ENCODE measurements at regions of chr6 and their contacts with region 1.

Region 1: GRCh38 chr6:104957301-104958177 is 632 bp downstream of the LIN28B start:
- DNase-seq: peak; percentile 19 to 52
- ATAC-seq: peak; percentile 55 to 77
- H3K4me3 ChIP-seq: peak overlapping the region; percentile 79
- H3K27ac ChIP-seq: peak overlapping the region; percentile 91 to 96
- H3K4me1 ChIP-seq: peaks cover 18% of the 10 kb centered on the region
- CTCF ChIP-seq: no peak
- EP300 ChIP-seq: no peak
- POLR2A ChIP-seq: no peak; the same call in 1 of the 2 replicates
- RAD21 ChIP-seq: no peak

Region 2: DNA sequence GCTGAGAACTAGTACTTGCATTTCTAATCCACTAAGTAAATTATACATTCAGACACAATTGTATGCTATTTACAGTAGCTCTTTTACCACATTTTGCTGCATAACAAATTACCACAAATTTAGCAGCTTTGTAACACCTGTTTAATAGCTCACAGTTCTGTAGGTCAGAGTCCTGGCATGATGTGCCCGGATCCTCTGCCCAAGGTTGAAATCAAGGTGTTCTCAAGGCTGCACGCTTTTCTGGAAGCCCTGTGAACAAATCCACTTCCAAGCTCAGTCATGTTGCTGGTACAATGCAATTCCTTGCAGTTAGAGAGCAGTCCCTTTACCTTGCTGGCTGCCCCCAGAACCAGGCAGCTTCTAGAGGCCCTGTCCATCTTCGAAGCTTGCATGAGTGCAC is 813.8 kb before region 1 on chr6:
- CTCF ChIA-PET with region 1: no interaction called
- POLR2A ChIA-PET with region 1: no interaction called
- DNase-seq: no peak
- ATAC-seq: no peak
- H3K4me3 ChIP-seq: no peak overlapping the region
- H3K27ac ChIP-seq: no peak overlapping the region
- H3K4me1 ChIP-seq: no peaks in the 10 kb centered on the region
- CTCF ChIP-seq: no peak
- EP300 ChIP-seq: no peak
- POLR2A ChIP-seq: no peak
- RAD21 ChIP-seq: no peak

Region 3: GRCh38 chr6:104843200-104843599 is 114.3 kb before region 1 on chr6:
- CTCF ChIA-PET with region 1: no interaction called
- POLR2A ChIA-PET with region 1: interaction called, 10 read pairs
- DNase-seq: no peak
- ATAC-seq: no peak
- H3K4me3 ChIP-seq: no peak overlapping the region
- H3K27ac ChIP-seq: no peak overlapping the region
- H3K4me1 ChIP-seq: peaks cover 3% of the 10 kb centered on the region; the same call in 1 of the 3 replicates
- CTCF ChIP-seq: no peak
- EP300 ChIP-seq: no peak
- POLR2A ChIP-seq: no peak
- RAD21 ChIP-seq: no peak

Region 4: DNA sequence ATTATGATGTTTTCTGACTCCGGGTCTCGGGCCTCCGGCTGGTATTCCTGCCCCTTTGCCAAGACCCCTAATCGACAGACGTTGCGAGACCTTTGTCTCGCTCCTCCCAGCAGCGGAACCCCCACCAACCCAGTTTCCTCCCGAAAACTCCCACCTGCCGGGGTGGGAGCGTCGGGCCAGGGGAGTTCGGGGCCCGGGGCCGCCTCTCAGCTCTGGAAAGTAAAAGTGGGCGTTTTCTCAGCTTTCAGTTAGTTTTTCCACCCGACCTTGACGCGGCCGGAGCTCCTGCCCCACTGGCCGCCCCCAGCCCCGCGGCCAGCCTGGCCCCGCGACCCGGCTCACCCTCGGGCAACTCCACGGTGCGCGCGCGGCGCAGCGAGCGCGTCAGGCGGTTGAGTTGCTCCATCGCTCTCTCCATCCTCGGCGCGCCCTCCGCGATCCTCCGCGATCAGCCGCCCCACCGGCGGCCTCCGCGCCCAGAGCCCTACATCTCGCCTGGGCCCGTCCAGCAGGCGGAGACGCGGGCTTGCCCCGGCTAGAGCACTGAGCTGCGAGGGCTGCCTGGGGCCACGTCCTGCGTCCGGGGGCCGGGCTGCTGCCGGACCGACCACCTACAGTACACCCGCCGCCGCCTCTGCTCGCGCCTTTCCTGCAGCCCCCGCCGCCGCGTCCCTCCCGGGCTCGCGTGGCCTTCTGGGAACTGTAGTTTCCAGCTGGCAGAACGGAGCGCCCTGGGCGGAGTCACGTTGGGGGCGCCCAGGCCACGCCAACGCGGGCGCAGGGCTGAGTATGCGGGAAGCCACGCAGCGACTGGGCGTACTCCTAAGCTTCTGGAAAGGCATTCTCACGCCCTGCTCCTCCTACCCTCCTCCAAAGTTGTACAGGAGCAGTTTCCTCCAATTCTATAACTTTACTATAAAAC is 98.1 kb before region 1 on chr6 and contains the start of gene HACE1:
- CTCF ChIA-PET with region 1: no interaction called
- POLR2A ChIA-PET with region 1: interaction called, 15 read pairs
- DNase-seq: peak; percentile 78 to 83
- ATAC-seq: peak; percentile 99 to 100
- H3K4me3 ChIP-seq: peak within 1 kb of the TSS; percentile 64
- H3K27ac ChIP-seq: peak within 1 kb of the TSS; percentile 80 to 87
- H3K4me1 ChIP-seq: peaks cover 6% of the 10 kb centered on the region; the same call in 1 of the 3 replicates
- CTCF ChIP-seq: no peak
- EP300 ChIP-seq: no peak
- POLR2A ChIP-seq: peak; percentile 53
- RAD21 ChIP-seq: no peak
- polyA plus RNA-seq, gene HACE1: 7.7 and 9.7 TPM in 2 replicates

Region 5: GRCh38 chr6:105058846-105059245 is 101.3 kb after region 1 on chr6:
- CTCF ChIA-PET with region 1: no interaction called
- POLR2A ChIA-PET with region 1: no interaction called
- DNase-seq: no peak
- ATAC-seq: no peak
- H3K4me3 ChIP-seq: no peak overlapping the region
- H3K27ac ChIP-seq: no peak overlapping the region
- H3K4me1 ChIP-seq: no peaks in the 10 kb centered on the region
- CTCF ChIP-seq: no peak
- EP300 ChIP-seq: no peak
- POLR2A ChIP-seq: no peak
- RAD21 ChIP-seq: no peak